ENCODE measurements at regions of chr5 and their contacts with region 1.

Region 1: DNA sequence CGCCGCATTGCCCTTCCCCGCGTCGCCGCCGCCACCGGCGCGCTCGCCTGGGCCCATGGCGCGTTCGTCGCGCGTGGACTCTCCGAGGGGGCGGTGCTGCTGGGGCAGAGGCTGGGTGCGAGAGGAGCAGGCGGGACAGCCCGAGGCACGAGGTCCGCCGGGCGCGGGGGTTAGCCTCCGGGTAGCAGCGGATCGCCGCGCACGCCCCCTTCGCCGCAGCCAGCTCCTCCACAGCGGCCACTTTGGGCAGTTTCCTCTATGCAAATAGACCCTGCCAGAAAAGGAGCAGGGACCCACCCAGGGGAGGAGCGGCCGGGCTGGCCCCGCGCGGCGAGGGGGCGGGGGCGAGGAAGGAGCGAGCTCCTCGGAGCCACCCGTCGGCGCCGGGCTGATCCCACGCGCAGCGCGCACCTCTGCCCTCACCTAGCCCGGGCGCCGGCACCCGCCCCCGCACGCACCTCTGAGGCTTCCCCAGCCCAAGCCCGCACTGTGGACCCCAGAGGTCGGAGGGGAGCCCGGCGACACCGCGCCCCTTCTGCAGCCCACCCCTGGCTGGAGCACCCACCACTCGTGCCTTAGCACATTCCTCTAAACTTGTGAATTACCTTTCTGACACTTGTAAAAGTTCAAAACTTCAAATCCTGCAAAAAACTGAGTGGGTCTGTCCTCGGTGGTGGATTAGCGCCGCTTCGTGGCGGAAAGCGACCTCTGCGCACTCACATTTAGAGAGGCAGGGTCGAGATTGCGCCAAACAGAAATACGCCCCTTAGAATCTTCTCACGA is at the start of gene COL23A1:
- DNase-seq: peak; percentile 43 to 53
- ATAC-seq: peak; percentile 65
- H3K4me3 ChIP-seq: peak within 1 kb of the TSS; percentile 53 to 65 (median 58)
- H3K27ac ChIP-seq: peak within 1 kb of the TSS; percentile 70 to 86 (median 78)
- H3K4me1 ChIP-seq: peaks cover 9 to 23% of the 10 kb centered on the region in 2 donors
- H3K27me3 ChIP-seq: peaks cover 0 to 2% (median 0%) of the 10 kb centered on the region in 3 donors
- CTCF ChIP-seq: peak; percentile 42 to 73 (median 64)
- POLR2A ChIP-seq: peak; percentile 16 to 18
- total RNA-seq, gene COL23A1: 0.62 to 1.1 (median 0.97) TPM in 3 of 4 donors, not detected in the other

Region 2: GRCh38 chr5:178461004-178461730 is 129.2 kb before region 1 on chr5:
- in situ Hi-C with region 1: no loop called
- intact Hi-C with region 1: loop called (anchors 2 kb)
- DNase-seq: peak; percentile 49 to 74
- ATAC-seq: peak; percentile 97 to 100
- H3K4me3 ChIP-seq: no peak overlapping the region
- H3K27ac ChIP-seq: no peak overlapping the region
- H3K4me1 ChIP-seq: peaks cover 0 to 3% of the 10 kb centered on the region in 2 donors
- H3K27me3 ChIP-seq: no peaks in the 10 kb centered on the region
- CTCF ChIP-seq: peak; percentile 69 to 88 (median 80)
- POLR2A ChIP-seq: no peak

Region 3: DNA sequence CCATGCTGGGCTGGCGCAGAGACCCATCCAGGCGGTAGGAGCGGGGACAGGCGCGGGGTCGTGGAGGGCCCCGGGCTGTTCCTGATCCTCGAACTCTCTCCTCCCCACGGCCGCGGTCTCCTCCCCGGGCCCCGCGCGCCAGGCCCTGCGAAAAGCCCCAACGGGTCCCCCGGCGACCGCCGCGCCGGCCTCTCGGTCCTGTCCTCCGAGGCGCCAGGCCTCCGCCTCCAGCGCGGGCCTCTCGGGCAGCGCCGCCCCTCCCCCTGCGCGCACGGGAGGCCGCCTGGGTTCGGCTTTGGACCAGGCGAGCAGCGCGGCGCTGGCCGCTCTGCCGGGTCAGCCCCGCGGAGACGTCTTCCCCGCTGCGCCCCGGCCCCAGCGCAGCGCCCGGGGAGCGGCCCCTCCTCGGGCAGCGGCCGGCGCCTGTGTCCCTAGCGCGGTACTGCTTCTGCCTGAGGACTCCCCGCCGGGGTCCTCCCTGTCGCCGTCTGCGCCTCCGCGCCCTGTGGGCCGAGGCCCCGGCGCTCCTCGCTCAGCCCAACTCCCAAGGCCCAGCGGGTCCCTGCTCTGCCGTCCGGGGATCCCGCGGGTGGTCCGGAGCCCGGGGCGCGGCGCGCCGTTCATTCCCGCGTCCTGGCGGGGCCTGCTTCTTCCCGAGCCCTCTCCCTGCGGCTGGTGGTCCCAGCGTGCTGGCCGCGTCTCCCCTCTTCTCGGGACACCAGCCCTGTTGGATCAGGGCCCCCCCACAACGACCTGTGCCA is 13.6 kb before region 1 on chr5:
- in situ Hi-C with region 1: no loop called
- intact Hi-C with region 1: no loop called
- DNase-seq: no peak
- ATAC-seq: no peak
- H3K4me3 ChIP-seq: peak overlapping the region in 3 of 4 donors; percentile 30 to 31 (median 30)
- H3K27ac ChIP-seq: peak overlapping the region in 1 of 4 donors; percentile 26
- H3K4me1 ChIP-seq: no peaks in the 10 kb centered on the region
- H3K27me3 ChIP-seq: peaks cover 21 to 25% (median 23%) of the 10 kb centered on the region in 3 donors
- CTCF ChIP-seq: no peak
- POLR2A ChIP-seq: no peak

Measured in gastrocnemius medialis (tissue), 4 donors.